ENCODE measurements at regions of chr13 and their contacts with region 1.

Region 1: GRCh38 chr13:92433963-92434362 is 792.6 kb upstream of the GPC6 start:
- DNase-seq: no peak
- H3K4me3 ChIP-seq: no peak overlapping the region
- H3K27ac ChIP-seq: no peak overlapping the region
- H3K4me1 ChIP-seq: no peaks in the 10 kb centered on the region
- CTCF ChIP-seq: no peak

Region 2: DNA sequence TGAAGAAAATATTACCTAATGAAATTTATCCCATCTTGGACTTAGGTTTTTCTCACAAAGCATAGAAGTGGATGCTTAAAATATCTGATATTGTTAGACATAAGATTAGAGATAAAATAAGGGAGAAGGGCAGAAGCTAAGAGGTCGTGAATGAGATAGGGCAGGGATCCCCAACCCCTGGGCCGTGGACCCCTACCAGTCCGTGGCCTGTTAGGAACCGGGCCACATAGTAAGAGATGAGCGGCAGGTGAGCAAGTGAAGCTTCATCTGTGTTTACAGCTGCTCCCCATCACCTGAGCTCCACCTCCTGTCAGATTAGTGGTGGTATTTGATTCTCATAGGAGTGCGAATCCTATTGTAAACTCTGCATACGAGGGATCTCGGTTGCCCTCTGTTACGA is 832.7 kb before region 1 on chr13:
- CTCF ChIA-PET with region 1: no interaction called
- POLR2A ChIA-PET with region 1: no interaction called
- intact Hi-C with region 1: no loop called
- DNase-seq: no peak
- H3K4me3 ChIP-seq: no peak overlapping the region
- H3K27ac ChIP-seq: no peak overlapping the region
- H3K4me1 ChIP-seq: no peaks in the 10 kb centered on the region
- CTCF ChIP-seq: no peak

Region 3: GRCh38 chr13:92444244-92444643 is 10.3 kb after region 1 on chr13:
- CTCF ChIA-PET with region 1: no interaction called
- POLR2A ChIA-PET with region 1: interaction called, 30 read pairs
- intact Hi-C with region 1: no loop called
- DNase-seq: no peak
- H3K4me3 ChIP-seq: no peak overlapping the region
- H3K27ac ChIP-seq: no peak overlapping the region
- H3K4me1 ChIP-seq: no peaks in the 10 kb centered on the region
- CTCF ChIP-seq: no peak

Region 4: GRCh38 chr13:92913840-92914239 is 479.9 kb after region 1 on chr13:
- CTCF ChIA-PET with region 1: no interaction called
- POLR2A ChIA-PET with region 1: no interaction called
- intact Hi-C with region 1: no loop called
- DNase-seq: no peak
- H3K4me3 ChIP-seq: no peak overlapping the region
- H3K27ac ChIP-seq: no peak overlapping the region
- H3K4me1 ChIP-seq: no peaks in the 10 kb centered on the region
- CTCF ChIP-seq: no peak